Mammary epithelial cell (primary cell): ENCODE measurements at regions of chr4 and their contacts with region 1.

Region 1: DNA sequence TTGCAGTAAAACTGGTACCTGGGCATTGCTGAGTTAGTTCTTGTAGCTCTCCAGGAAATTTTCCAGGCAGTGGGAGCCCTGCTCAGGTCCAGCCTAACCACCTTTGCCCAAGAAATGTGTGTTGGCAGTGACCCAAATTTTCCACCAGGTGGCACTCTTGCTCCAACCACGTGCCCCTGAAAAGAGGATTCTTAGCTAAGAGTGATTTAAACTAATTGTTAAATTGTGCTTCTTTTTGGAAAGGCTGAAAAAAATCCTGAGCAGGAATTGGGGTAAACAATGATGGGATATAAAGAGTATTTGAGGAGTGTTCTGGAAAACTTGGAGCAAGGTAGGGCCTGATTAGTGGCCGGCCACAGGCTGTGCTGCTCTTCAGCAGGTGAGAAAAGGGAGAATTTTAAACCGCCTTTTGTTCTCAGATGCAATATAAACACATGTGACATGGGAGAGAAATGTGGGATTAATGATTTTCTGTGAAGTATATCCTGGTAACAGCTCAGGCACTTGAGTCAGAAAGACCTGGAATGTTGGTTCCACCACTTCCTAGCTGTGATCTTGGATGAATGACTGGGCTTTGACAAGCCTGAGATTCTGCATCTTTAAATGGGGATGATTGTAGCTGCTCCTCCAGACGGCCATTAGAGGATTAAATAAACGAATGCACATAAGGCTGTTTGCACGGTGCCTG is 219.6 kb downstream of the PTTG2 start:
- DNase-seq: peak; percentile 74
- H3K4me3 ChIP-seq: no peak overlapping the region
- H3K27ac ChIP-seq: peak overlapping the region; percentile 37
- H3K4me1 ChIP-seq: peaks cover 26% of the 10 kb centered on the region
- H3K27me3 ChIP-seq: no peaks in the 10 kb centered on the region
- CTCF ChIP-seq: peak; percentile 91 to 92

Region 2: DNA sequence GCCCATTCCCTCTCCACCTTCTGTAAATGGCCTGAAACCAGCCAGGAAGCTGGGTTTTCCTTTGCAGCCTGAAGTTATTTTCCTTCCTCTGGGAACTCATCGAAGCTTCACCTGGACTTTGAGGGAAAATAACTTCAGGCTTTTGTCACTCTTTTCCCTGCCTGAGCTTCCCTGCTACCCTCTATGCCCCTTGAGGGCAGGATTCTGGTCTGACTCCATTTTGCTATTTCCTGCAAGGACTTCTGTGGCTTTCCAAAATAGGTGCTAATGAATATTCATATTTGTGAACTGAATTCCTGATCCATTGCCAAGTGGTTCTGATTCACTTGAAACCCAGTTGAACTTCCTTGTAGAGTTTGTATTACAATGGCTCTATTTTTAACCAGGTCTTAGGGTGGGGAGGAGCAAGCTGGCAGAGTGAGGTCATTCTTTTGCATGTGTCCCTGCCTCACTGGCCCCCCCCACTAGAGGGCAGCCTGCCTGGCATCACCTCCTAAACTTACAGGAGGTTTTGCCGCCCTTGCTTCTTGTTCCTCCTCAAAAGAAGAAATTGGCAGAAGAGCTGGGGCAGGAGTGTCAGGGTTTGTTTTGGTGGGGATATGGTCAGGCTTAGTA is 209.2 kb before region 1 on chr4:
- CTCF ChIA-PET with region 1: no interaction called
- dilution Hi-C with region 1: no loop called
- in situ Hi-C with region 1: no loop called
- intact Hi-C with region 1: no loop called
- DNase-seq: peak; percentile 68
- H3K4me3 ChIP-seq: no peak overlapping the region
- H3K27ac ChIP-seq: no peak overlapping the region
- H3K4me1 ChIP-seq: no peaks in the 10 kb centered on the region
- H3K27me3 ChIP-seq: no peaks in the 10 kb centered on the region
- CTCF ChIP-seq: peak; percentile 64 to 77

Region 3: DNA sequence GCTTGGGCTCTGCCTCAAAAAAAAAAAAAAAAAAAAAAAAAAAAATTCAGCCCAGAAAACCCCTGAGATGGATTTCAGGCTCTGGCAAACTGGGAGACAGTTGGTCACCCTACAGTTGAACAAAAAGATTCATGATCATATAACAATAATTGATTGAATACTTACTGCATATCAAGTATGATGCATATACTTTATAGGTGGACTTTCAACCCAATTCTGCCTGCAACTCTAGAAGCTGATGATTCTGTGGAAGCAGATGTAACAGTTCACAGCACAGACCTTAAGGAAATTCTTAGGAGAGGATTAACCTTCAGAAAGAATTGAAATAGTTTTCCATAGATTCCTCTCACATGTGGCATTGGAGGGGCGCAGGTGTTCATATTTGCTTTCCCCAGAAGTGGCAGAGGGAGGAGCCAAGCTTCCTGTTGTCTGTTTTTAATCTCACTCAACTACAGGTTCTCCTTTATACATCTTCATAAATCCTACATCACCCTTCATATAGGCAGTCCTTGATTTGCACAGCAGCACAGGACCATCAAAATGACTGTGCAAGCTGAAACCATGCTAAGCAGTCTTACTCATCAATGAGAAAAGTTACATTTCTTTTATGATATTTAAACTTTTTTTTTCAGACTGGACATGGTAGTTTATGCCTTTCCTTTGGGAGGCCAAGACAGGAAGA is 334.8 kb after region 1 on chr4:
- CTCF ChIA-PET with region 1: no interaction called
- dilution Hi-C with region 1: no loop called
- in situ Hi-C with region 1: no loop called
- intact Hi-C with region 1: loop called (anchors 10 kb)
- DNase-seq: no peak
- H3K4me3 ChIP-seq: no peak overlapping the region
- H3K27ac ChIP-seq: no peak overlapping the region
- H3K4me1 ChIP-seq: no peaks in the 10 kb centered on the region
- H3K27me3 ChIP-seq: no peaks in the 10 kb centered on the region
- CTCF ChIP-seq: no peak

Region 4: GRCh38 chr4:38562751-38563198 is 382.9 kb after region 1 on chr4:
- CTCF ChIA-PET with region 1: no interaction called
- dilution Hi-C with region 1: no loop called
- in situ Hi-C with region 1: no loop called
- intact Hi-C with region 1: loop called (anchors 10 kb)
- DNase-seq: peak; percentile 39
- H3K4me3 ChIP-seq: no peak overlapping the region
- H3K27ac ChIP-seq: no peak overlapping the region
- H3K4me1 ChIP-seq: peaks cover 38% of the 10 kb centered on the region
- H3K27me3 ChIP-seq: no peaks in the 10 kb centered on the region
- CTCF ChIP-seq: no peak

Region 5: GRCh38 chr4:38675146-38676121 is 495.6 kb after region 1 on chr4:
- CTCF ChIA-PET with region 1: no interaction called
- dilution Hi-C with region 1: no loop called
- in situ Hi-C with region 1: loop called in 1 of 2 experiments (anchors 10 kb)
- intact Hi-C with region 1: loop called (anchors 1 kb)
- DNase-seq: peak; percentile 68
- H3K4me3 ChIP-seq: no peak overlapping the region
- H3K27ac ChIP-seq: peak overlapping the region; percentile 82
- H3K4me1 ChIP-seq: peaks cover 52% of the 10 kb centered on the region
- H3K27me3 ChIP-seq: no peaks in the 10 kb centered on the region
- CTCF ChIP-seq: peak; percentile 89 to 94

Region 6: DNA sequence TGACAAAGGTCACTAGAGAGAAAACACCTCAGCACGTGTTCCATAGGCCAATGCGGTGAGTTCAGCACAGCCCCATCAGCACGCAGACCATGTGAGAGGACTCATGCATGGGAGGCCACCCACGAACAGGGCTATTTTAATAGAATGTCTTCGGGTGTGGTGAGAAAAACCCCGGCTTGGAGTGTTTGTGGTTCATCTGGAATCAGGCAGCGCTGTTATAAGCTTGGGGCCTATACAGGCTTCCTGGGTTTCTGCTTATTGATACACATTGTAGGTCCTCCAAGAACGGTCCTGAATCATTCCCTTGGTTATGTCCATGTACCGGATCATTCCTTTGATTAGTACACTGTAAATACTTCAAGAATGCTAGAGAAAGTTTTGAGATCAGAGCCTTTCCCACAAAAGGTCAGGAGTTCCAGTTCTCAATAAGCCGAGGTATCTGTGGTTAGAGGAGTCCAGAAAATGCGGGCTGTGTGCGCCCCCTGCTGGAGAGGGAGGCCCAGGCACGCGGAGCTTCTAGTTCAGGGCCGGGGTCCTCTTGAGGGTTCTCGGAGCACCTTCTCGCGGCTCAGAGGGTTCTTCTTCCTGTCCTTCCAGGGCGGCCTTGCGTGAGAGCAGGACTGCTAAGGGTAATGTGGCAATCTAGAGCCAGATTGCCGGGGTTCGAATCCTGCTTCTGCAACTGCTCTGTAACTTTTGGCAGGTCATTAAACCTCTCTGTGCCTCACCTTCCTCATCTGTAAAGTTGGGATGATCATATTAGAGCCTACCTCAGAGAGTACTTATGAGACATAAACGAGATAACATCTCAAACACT is 551.2 kb after region 1 on chr4:
- CTCF ChIA-PET with region 1: no interaction called
- dilution Hi-C with region 1: no loop called
- in situ Hi-C with region 1: loop called (anchors 5 kb)
- intact Hi-C with region 1: loop called (anchors 1 kb)
- DNase-seq: peak; percentile 86
- H3K4me3 ChIP-seq: no peak overlapping the region
- H3K27ac ChIP-seq: no peak overlapping the region
- H3K4me1 ChIP-seq: peaks cover 12% of the 10 kb centered on the region
- H3K27me3 ChIP-seq: no peaks in the 10 kb centered on the region
- CTCF ChIP-seq: peak; percentile 94 to 95

Region 7: GRCh38 chr4:38867478-38868058 is 687.7 kb after region 1 on chr4 and contains the start of gene FAM114A1:
- CTCF ChIA-PET with region 1: no interaction called
- dilution Hi-C with region 1: no loop called
- in situ Hi-C with region 1: no loop called
- intact Hi-C with region 1: loop called (anchors 10 kb)
- DNase-seq: peak; percentile 70
- H3K4me3 ChIP-seq: peak within 1 kb of the TSS; percentile 57 to 91 (median 84)
- H3K27ac ChIP-seq: peak within 1 kb of the TSS; percentile 65
- H3K4me1 ChIP-seq: peaks cover 18% of the 10 kb centered on the region
- H3K27me3 ChIP-seq: no peaks in the 10 kb centered on the region
- CTCF ChIP-seq: no peak
- total RNA-seq, gene FAM114A1: 69.0 to 107 TPM